Heart right ventricle (tissue), 16 donors: ENCODE measurements at regions of chr21 and their contacts with region 1.

Region 1: DNA sequence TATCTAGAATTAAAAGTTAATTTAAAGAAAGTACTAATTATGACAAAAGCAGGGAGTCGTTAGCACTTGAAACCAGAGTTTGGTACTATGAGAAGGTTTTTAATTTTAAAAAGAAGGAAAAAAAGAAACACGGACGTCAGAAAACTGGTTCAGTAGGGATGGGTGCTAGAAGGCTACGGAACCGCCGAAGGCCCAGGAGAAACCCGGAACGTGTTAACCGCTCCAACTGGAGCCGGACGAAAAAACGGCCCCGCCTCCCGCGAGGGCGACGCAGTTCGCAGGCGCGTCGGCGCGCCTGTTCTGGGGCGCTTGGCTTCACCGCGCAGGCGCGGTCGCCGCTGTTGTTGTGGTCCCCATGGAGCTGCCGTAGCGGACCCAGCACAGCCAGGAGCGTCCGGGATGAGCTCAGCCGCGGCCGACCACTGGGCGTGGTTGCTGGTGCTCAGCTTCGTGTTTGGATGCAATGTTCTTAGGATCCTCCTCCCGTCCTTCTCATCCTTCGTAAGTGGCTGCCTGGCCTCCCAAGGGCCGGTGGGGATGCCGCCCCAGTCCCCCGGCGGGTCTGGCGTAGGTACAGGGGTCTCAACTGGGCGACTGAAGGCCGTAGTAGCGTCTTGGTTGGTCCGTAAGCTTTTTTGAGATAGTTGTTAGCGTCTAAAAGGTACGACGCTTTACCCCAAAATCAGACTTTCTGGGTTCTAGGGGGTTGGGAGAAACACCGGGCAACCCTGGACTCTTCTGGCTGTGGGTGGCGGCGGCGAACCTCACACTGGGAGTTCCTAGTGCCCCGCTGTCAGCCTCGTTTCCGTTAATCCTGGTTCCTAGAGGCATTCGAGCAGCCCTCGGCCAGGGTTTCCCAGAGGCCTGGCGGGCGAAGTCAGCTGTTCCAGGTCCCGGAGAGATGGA is 31.4 kb upstream of the HMGN1 start:
- DNase-seq: peak; percentile 95 to 98
- ATAC-seq: peak; percentile 99 to 100 (median 99)
- H3K4me3 ChIP-seq: peak overlapping the region; percentile 63 to 95 (median 76)
- H3K27ac ChIP-seq: peak overlapping the region; percentile 38 to 94 (median 90)
- H3K4me1 ChIP-seq: peaks cover 3 to 29% (median 15%) of the 10 kb centered on the region in 9 donors
- H3K27me3 ChIP-seq: no peaks in the 10 kb centered on the region
- CTCF ChIP-seq: no peak

Region 2: GRCh38 chr21:39349211-39350093 is 30.8 kb before region 1 on chr21:
- intact Hi-C with region 1: loop called in 7 of 10 experiments (anchors 2 to 5 kb)
- DNase-seq: peak; percentile 94 to 95
- ATAC-seq: peak; percentile 94 to 98 (median 97)
- H3K4me3 ChIP-seq: peak overlapping the region; percentile 53 to 90 (median 78)
- H3K27ac ChIP-seq: peak overlapping the region; percentile 83 to 99 (median 93)
- H3K4me1 ChIP-seq: peaks cover 2 to 44% (median 32%) of the 10 kb centered on the region in 9 donors
- H3K27me3 ChIP-seq: no peaks in the 10 kb centered on the region
- CTCF ChIP-seq: no peak